ENCODE measurements at regions of chr5 and their contacts with region 1.

Region 1: DNA sequence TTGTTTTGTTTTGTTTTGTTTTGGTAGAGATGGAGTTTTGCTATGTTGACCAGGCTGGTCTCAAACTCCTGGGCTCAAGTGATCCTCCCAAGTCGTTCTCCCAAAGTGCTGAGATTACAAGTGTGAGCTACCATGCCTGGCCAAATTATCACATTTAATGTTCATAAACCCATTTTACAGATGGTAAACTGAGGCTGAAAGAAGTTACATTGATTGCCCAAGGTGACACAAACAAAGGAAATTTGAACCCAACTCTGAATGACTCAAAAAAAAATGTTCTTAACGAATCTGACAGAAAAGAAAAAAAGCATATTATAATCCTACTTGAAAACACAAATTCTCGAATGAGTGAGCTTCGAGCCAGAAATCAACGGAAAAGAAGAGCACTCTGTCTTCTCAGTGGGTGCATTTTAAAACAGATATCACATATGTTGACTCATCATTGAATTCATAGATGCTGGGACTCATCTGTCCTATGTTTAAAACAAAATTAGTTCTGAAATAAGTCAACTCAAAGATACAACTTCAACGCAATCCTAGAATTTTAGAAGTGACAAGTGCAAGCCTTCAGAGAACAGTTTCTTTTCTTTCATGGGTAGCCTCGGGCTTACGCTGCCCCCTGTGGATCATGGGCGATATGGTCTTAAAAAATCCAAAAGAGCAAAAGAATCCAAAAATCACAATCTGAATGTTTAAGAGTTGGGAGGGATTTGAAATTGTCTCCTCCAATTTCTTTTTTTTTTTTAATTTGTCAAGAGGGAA is 28.4 kb downstream of the TIMD4 start:
- DNase-seq: peak in 1 of 2 donors; percentile 4
- ATAC-seq: no peak
- H3K4me3 ChIP-seq: no peak overlapping the region
- H3K27ac ChIP-seq: no peak overlapping the region
- H3K4me1 ChIP-seq: no peaks in the 10 kb centered on the region
- H3K27me3 ChIP-seq: no peaks in the 10 kb centered on the region
- CTCF ChIP-seq: peak; percentile 18 to 64 (median 51)

Region 2: GRCh38 chr5:155954701-155955445 is 979.8 kb before region 1 on chr5:
- intact Hi-C with region 1: loop called in 1 of 10 experiments (anchors 5 kb)
- DNase-seq: no peak
- ATAC-seq: no peak
- H3K4me3 ChIP-seq: no peak overlapping the region
- H3K27ac ChIP-seq: no peak overlapping the region
- H3K4me1 ChIP-seq: peaks cover 0 to 39% (median 9%) of the 10 kb centered on the region in 9 donors
- H3K27me3 ChIP-seq: no peaks in the 10 kb centered on the region
- CTCF ChIP-seq: no peak

Measured in heart right ventricle (tissue), 16 donors.